Activated CD4-positive, alpha-beta T cell treated with anti-CD3 and anti-CD28 coated beads, Interleukin-2, amount 10 ng/mL, durations not matched to agents 24 days and 14 days (primary cell): ENCODE measurements at regions of chr2 and their contacts with region 1.

Region 1: GRCh38 chr2:33583194-33583938 is 15.7 kb downstream of the FAM98A start:
- DNase-seq: peak; percentile 79
- H3K4me3 Mint-ChIP-seq: no peak overlapping the region
- H3K27ac Mint-ChIP-seq: no peak overlapping the region
- H3K4me1 Mint-ChIP-seq: peaks cover 12% of the 10 kb centered on the region
- H3K27me3 Mint-ChIP-seq: no peaks in the 10 kb centered on the region

Region 2: GRCh38 chr2:32772638-32773447 is 810.5 kb before region 1 on chr2:
- intact Hi-C with region 1: loop called (anchors 5 kb)
- DNase-seq: no peak
- H3K4me3 Mint-ChIP-seq: no peak overlapping the region
- H3K27ac Mint-ChIP-seq: no peak overlapping the region
- H3K4me1 Mint-ChIP-seq: peaks cover 2% of the 10 kb centered on the region
- H3K27me3 Mint-ChIP-seq: no peaks in the 10 kb centered on the region

Region 3: GRCh38 chr2:33298233-33298632 is 285.1 kb before region 1 on chr2:
- intact Hi-C with region 1: no loop called
- DNase-seq: no peak
- H3K4me3 Mint-ChIP-seq: no peak overlapping the region
- H3K27ac Mint-ChIP-seq: no peak overlapping the region
- H3K4me1 Mint-ChIP-seq: no peaks in the 10 kb centered on the region
- H3K27me3 Mint-ChIP-seq: no peaks in the 10 kb centered on the region

Region 4: GRCh38 chr2:33321236-33321771 is 262.1 kb before region 1 on chr2:
- intact Hi-C with region 1: loop called (anchors 5 kb)
- DNase-seq: peak; percentile 75
- H3K4me3 Mint-ChIP-seq: peak overlapping the region; percentile 61
- H3K27ac Mint-ChIP-seq: peak overlapping the region; percentile 91
- H3K4me1 Mint-ChIP-seq: peaks cover 22% of the 10 kb centered on the region
- H3K27me3 Mint-ChIP-seq: peaks cover 5% of the 10 kb centered on the region

Region 5: DNA sequence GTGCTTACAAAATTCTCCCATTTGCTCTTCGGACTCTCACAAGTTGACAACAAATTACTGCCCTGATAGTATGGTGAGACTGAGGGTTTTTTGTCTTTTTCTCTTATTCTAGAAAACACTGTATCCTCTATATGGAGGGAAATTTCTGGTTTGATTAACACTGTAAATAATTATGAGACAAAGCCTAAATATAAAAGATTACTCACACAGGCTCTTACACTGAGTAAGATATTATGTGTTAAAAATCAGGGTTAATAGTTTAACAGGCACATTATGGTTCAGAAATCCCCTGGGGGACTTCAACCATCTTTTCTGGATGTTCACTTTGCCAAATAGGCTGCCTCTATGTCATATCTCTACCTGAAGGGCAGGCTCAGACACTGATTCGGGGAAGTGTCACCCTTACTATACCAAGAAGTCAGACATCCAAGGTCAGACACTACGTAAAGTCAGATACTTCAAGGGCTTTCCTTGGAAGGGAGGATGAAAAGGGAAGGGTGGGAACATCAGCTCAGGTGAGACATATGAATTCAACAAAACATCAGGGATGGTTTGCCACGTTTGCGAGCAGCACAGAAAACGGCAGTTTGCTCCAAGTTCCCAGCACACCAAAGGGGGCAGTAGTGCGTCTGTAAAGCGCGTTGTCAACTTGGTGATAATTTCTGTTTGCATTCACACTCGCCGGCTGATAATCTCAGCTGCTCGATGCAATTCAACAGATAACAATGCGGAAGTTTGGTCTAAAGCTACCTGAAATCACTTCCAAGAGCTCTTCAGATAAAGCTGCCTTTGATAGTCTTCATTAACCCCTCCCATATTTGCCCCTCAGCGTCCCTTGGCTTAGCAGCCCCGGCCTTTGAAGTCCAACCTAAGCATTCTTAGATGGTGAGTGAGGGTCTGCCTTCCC is 107.9 kb before region 1 on chr2:
- intact Hi-C with region 1: loop called (anchors 1 kb)
- DNase-seq: peak; percentile 95
- H3K4me3 Mint-ChIP-seq: peak overlapping the region; percentile 93
- H3K27ac Mint-ChIP-seq: peak overlapping the region; percentile 99
- H3K4me1 Mint-ChIP-seq: peaks cover 28% of the 10 kb centered on the region
- H3K27me3 Mint-ChIP-seq: peaks cover 6% of the 10 kb centered on the region

Region 6: GRCh38 chr2:33529771-33530351 is 53.5 kb before region 1 on chr2:
- intact Hi-C with region 1: loop called (anchors 5 kb)
- DNase-seq: no peak
- H3K4me3 Mint-ChIP-seq: no peak overlapping the region
- H3K27ac Mint-ChIP-seq: no peak overlapping the region
- H3K4me1 Mint-ChIP-seq: peaks cover 22% of the 10 kb centered on the region
- H3K27me3 Mint-ChIP-seq: no peaks in the 10 kb centered on the region